Mammary epithelial cell (primary cell): ENCODE measurements at regions of chr19 and their contacts with region 1.

Region 1: DNA sequence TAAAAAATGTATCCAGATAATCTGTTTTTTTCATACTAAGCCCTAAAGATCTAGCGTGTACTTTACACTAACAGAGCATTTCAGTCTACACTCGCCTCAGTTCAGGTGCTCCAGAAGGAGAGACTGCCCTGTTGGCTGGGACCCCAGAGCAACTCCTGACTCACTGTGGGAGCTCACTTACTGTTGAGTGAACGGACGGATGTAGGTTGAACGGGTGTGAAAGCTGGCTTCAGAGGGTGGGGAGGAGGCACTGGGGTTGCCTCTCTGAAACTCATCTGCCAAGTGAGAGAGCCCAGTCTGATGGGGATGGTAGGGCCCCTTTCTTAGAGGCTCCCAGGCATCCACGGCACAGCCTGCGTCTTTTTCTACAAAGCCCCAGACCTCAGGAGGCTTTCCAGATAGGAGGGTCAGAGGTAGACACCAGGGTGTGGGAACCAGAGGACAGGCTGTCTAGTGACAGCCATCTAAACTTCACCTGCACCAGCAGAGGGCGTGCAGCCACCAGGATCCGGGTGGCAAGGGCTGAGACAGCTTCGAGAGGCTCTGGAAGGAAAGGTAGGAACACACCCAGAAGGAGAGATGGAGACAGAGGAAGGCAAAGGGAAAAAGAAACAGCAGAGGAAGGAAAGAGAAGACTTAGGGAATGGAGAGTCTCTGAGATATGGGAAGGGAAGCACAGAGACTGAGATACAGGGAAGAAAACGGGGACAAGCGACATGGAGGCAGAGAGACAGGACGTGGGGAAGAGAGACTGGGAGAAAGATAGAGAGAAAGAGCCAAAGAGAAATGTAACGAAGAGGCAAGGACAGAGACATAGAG is 3.7 kb downstream of the KASH5 start:
- DNase-seq: peak; percentile 65
- H3K4me3 ChIP-seq: no peak overlapping the region
- H3K27ac ChIP-seq: no peak overlapping the region
- H3K4me1 ChIP-seq: no peaks in the 10 kb centered on the region
- H3K27me3 ChIP-seq: no peaks in the 10 kb centered on the region
- CTCF ChIP-seq: peak; percentile 85 to 86

Region 2: DNA sequence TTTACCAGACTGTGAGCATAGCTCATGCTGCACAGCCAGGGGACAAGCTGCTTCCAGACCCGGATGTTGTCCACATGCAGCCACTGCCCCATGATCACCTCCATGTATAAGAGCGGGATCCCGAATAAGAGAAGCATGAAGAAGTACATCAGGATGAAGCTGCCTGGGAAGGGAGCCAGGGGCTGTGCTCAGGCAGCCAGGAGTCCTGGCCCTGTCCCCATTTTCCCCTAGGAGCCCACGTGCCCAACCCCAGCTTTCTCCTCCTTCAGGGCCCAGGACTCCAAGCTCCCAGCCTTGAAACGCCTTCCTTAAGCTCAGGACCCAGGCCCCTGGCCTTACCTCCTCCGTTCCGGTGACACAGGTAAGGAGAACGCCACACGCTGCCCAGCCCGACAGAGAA is 136.1 kb before region 1 on chr19:
- CTCF ChIA-PET with region 1: no interaction called
- dilution Hi-C with region 1: loop called (anchors 10 kb)
- in situ Hi-C with region 1: no loop called
- intact Hi-C with region 1: no loop called
- DNase-seq: no peak
- H3K4me3 ChIP-seq: no peak overlapping the region
- H3K27ac ChIP-seq: no peak overlapping the region
- H3K4me1 ChIP-seq: no peaks in the 10 kb centered on the region
- H3K27me3 ChIP-seq: no peaks in the 10 kb centered on the region
- CTCF ChIP-seq: no peak

Region 3: GRCh38 chr19:49443366-49444099 is 51.7 kb after region 1 on chr19:
- CTCF ChIA-PET with region 1: no interaction called
- dilution Hi-C with region 1: no loop called
- in situ Hi-C with region 1: loop called (anchors 5 to 10 kb)
- intact Hi-C with region 1: loop called (anchors 1 kb)
- DNase-seq: peak; percentile 89
- H3K4me3 ChIP-seq: peak overlapping the region; percentile 66 to 88 (median 82)
- H3K27ac ChIP-seq: peak overlapping the region; percentile 54
- H3K4me1 ChIP-seq: no peaks in the 10 kb centered on the region
- H3K27me3 ChIP-seq: peaks cover 11% of the 10 kb centered on the region
- CTCF ChIP-seq: peak; percentile 66 to 91

Region 4: DNA sequence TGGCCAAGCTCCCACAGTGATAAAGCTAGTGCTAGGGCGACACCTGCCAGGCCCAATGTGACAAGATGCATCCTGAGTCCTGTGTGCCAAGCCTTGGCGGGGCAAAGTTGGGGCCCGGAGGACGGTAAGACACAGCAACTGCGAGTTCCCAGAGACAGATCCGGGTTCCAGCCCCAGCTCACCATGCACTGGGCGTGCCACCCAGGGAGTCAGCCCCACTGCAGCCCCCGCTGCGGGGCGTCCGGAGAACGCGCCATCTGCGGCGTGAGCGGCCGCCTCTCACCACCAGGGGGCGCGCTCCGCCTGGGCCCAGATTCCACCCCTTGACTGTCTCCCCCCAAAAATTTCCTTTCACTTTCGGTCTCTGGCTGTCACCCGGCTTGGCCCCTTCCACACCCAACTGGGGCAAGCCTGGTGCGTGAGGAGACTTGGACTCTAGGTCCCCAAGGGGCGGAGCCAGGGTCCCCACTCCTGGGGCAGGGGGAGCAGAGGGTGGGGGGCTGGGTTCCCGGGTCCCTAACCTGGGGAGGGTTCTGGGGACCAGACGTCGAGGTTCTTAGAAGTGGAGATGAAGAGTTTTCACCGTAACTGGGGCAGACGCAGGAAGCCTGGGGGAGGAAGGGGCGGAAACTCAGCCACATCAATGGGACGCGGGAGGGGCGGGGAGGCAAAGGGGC is 82.2 kb after region 1 on chr19 and contains the start of gene FLT3LG:
- CTCF ChIA-PET with region 1: no interaction called
- dilution Hi-C with region 1: loop called (anchors 10 kb)
- in situ Hi-C with region 1: no loop called
- intact Hi-C with region 1: loop called (anchors 1 kb)
- DNase-seq: peak; percentile 55
- H3K4me3 ChIP-seq: peak within 1 kb of the TSS; percentile 63 to 76 (median 72)
- H3K27ac ChIP-seq: no peak within 1 kb of the TSS
- H3K4me1 ChIP-seq: peaks cover 8% of the 10 kb centered on the region
- H3K27me3 ChIP-seq: no peaks in the 10 kb centered on the region
- CTCF ChIP-seq: peak; percentile 78 to 98
- total RNA-seq, gene FLT3LG: 0.50 to 4.2 TPM

Region 5: DNA sequence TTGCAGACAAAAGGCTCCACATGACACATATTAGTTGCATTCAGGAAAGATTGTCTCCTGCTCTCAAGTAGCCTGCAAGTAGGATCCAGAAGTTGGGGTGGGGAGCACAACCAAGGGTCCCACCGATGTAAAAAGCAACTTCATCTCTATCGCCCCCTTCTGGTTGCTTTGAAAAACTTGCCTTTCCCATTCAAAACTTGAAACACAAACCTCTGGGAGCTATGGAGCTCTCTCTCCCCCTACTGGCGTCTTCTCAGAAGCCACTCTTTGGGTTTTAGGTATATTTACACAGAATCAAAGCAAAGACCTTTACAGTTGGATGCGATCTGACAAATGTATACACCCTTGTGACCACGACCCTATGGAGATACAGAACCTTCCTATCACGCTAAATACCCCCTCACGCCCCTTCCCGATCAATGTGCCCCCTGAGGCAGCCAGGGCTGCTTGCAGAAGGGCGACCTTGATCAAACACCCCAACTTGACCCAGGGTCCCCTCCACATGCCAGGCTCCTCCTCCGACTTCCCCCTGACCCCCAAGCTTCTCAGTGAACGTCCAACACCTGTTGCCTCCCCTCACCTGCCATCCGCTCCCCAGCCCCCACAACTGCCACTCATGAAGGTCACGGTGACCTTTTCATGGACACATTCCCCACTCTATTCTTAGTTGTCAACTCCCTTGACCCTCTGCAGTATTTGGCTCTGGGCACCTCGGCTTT is 178.5 kb after region 1 on chr19:
- CTCF ChIA-PET with region 1: no interaction called
- dilution Hi-C with region 1: no loop called
- in situ Hi-C with region 1: no loop called
- intact Hi-C with region 1: loop called (anchors 10 kb)
- DNase-seq: peak; percentile 58
- H3K4me3 ChIP-seq: no peak overlapping the region
- H3K27ac ChIP-seq: no peak overlapping the region
- H3K4me1 ChIP-seq: peaks cover 3% of the 10 kb centered on the region
- H3K27me3 ChIP-seq: no peaks in the 10 kb centered on the region
- CTCF ChIP-seq: peak; percentile 99 to 100

Region 6: DNA sequence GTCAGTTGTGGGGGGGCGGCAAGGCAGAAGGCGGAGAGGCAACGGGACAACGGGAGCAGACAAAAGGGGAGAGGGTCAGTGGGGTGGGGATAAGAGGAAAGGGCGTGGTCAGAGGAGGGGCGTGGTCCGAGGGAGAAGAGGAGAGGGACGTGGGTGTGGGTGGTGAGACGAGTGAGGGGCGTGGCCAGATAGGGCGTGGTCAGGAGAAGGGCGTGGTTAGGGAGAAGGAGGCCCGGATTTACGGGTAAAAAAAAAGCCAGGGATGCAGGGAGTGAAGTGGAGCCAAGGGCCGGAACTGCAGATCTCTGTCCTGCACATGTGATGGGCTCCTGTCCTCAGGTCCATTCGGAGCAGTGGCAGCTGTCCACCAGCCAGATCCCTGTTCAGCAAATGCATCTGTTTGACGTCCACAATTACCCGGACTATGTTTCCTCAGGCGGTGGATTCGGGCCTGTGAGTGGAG is 320.6 kb after region 1 on chr19:
- CTCF ChIA-PET with region 1: no interaction called
- dilution Hi-C with region 1: no loop called
- in situ Hi-C with region 1: no loop called
- intact Hi-C with region 1: no loop called
- DNase-seq: no peak
- H3K4me3 ChIP-seq: no peak overlapping the region
- H3K27ac ChIP-seq: no peak overlapping the region
- H3K4me1 ChIP-seq: no peaks in the 10 kb centered on the region
- H3K27me3 ChIP-seq: no peaks in the 10 kb centered on the region
- CTCF ChIP-seq: no peak